ENCODE measurements at regions of chr11 and their contacts with region 1.

Region 1: DNA sequence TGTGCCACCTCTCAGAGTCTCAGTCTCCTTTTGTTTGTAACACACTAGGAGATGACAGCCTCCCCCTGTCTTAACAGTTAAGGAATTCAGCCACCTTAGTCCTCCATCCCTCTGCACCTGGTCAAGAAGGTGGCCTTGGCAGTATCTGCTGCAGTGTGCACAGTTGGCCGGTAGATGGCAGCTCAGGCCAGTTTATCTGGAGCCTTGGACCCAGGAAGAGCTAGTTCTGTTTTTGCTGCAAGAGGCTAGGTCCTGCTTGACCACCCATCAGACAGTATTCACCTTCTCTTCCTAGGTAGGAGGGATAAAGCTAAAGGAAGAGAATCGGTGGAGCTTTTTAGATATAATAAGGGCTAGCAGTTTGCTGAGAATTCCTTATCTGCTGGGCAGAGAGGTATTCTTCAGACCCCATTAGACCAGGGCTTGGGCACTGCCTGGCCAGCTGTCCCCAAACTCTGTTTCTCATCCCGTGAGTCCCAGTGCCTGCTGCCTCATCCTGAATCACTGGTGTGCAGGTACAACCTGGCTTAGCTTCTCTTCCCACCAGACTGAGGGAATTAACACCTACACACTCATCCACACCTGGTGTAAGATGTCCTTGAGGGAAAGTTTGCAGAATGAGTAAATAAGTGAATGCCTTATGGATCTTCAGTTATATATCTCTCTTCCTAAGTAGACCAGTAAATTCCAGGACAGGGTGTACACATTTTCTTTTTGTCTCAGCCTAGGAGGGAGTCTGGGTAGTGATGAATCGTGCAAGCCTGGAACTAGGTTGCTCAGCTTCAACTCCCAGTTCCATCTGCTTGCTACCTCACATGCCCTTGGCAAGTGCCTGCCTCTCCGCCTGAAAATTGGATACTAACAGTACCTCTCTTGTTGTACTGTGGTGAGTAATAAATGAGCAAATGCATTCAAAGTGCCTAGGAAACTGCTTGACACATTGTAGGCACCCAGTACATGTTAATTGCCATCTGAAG is 70.8 kb upstream of the NARS2 start:
- DNase-seq: no peak

Region 2: GRCh38 chr11:79066456-79067351 is 421.2 kb after region 1 on chr11:
- intact Hi-C with region 1: loop called in 1 of 2 experiments (anchors 5 kb)
- DNase-seq: peak; percentile 66

Region 3: GRCh38 chr11:79092791-79093353 is 447.4 kb after region 1 on chr11:
- intact Hi-C with region 1: loop called in 1 of 2 experiments (anchors 10 kb)
- DNase-seq: no peak

Measured in posterior vena cava (tissue), 2 donors.